A549 (cell line): ENCODE measurements at regions of chr1 and their contacts with region 1.

Region 1: DNA sequence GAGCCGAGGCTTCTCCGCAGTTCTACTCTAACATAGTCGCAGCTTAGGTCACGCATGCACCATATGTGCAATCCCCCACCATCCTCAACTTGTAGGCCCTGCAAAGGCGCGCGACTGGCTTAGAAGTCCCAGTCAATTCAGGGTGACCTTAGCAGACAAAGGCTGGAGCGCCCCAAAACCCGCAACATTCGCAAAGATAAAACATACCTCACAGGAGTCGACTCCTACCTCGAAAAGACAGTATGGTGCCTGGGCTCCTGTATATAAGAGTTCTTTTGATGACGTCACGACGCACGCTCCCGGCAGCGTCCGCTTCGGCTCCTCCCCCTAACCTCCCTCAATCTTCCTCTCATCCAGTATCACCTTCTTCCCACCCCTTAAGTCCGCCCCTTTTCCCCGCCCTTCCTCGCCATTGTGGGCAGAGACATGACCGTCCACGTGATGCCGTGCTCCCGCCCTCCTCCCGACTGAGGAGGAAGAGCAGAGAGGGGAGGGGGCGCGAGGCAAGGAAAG is at the start of gene GAS5:
- DNase-seq: peak; percentile 89 to 100
- ATAC-seq: peak; percentile 71 to 90
- H3K4me3 ChIP-seq: peak within 1 kb of the TSS; percentile 97
- H3K27ac ChIP-seq: peak within 1 kb of the TSS; percentile 96 to 97
- H3K4me1 ChIP-seq: peaks cover 30% of the 10 kb centered on the region
- CTCF ChIP-seq: no peak
- EP300 ChIP-seq: no peak
- POLR2A ChIP-seq: peak; percentile 99
- RAD21 ChIP-seq: no peak
- polyA plus RNA-seq, gene GAS5: 1,735 and 1,903 TPM in 2 replicates

Region 2: GRCh38 chr1:173702736-173703135 is 165.1 kb before region 1 on chr1:
- CTCF ChIA-PET with region 1: no interaction called
- POLR2A ChIA-PET with region 1: no interaction called
- DNase-seq: no peak
- ATAC-seq: no peak
- H3K4me3 ChIP-seq: no peak overlapping the region
- H3K27ac ChIP-seq: no peak overlapping the region
- H3K4me1 ChIP-seq: no peaks in the 10 kb centered on the region
- CTCF ChIP-seq: no peak
- EP300 ChIP-seq: no peak
- POLR2A ChIP-seq: no peak
- RAD21 ChIP-seq: no peak

Region 3: GRCh38 chr1:173824331-173825081 is 43.3 kb before region 1 on chr1 and contains the starts of genes CENPL and DARS2:
- CTCF ChIA-PET with region 1: no interaction called
- POLR2A ChIA-PET with region 1: interaction called, 26 read pairs
- DNase-seq: peak; percentile 91 to 98
- ATAC-seq: peak; percentile 96
- H3K4me3 ChIP-seq: peak within 1 kb of the TSS; percentile 74
- H3K27ac ChIP-seq: peak within 1 kb of the TSS; percentile 90 to 92
- H3K4me1 ChIP-seq: peaks cover 16% of the 10 kb centered on the region; the same call in 1 of the 3 replicates
- CTCF ChIP-seq: no peak
- EP300 ChIP-seq: no peak
- POLR2A ChIP-seq: peak; percentile 51
- RAD21 ChIP-seq: no peak
- polyA plus RNA-seq, gene CENPL: 15.6 and 20.2 TPM in 2 replicates
- polyA plus RNA-seq, gene DARS2: 67.0 and 70.4 TPM in 2 replicates

Region 4: DNA sequence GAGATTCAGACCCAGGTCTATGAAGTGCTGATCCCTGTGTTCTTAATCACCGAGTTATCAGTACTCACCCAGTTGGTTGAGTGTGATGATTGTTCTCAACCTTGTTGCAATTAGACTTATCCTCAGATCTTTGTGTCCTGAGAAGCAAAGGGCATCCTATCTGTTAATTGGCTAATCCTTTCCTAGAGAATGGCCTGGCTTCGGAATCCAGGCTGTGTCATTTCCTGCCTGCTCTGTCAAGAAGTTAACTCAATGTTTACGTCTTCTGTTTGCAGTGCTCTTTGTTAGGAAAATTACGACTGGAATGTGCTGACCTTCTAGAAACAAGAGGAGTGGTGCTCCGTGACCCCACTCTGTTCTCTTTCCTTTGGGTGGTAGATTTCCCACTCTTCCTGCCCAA is 14.7 kb before region 1 on chr1:
- CTCF ChIA-PET with region 1: interaction called, 5 read pairs
- POLR2A ChIA-PET with region 1: interaction called, 20 read pairs
- DNase-seq: no peak
- ATAC-seq: no peak
- H3K4me3 ChIP-seq: no peak overlapping the region
- H3K27ac ChIP-seq: no peak overlapping the region
- H3K4me1 ChIP-seq: no peaks in the 10 kb centered on the region
- CTCF ChIP-seq: no peak
- EP300 ChIP-seq: no peak
- POLR2A ChIP-seq: no peak
- RAD21 ChIP-seq: no peak

Region 5: GRCh38 chr1:173914366-173914871 is 46.6 kb after region 1 on chr1:
- CTCF ChIA-PET with region 1: interaction called, 14 read pairs
- POLR2A ChIA-PET with region 1: interaction called, 3 read pairs
- DNase-seq: peak; percentile 69 to 71
- ATAC-seq: peak; percentile 85 to 94
- H3K4me3 ChIP-seq: no peak overlapping the region
- H3K27ac ChIP-seq: no peak overlapping the region
- H3K4me1 ChIP-seq: no peaks in the 10 kb centered on the region
- CTCF ChIP-seq: peak; percentile 65
- EP300 ChIP-seq: no peak
- POLR2A ChIP-seq: no peak
- RAD21 ChIP-seq: peak; percentile 23 to 54; a peak in 3 of 5 replicates

Region 6: DNA sequence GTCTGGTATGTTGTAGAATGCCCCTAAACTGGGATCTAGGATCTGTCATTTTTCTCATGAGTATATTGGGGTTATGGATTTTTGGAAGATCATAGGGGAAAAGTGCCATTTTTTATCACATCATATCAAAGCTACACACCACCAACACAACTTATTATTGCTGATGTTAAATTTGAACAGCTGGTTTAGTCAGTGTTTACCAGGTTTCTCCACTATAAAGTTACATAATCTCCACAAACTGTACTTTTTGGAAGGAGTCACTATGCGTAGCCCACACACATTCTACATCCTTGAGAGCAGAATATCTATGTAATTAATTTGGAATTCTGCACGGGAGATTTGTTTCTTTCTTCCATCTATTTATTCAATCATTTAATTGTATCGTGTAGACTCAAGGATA is 119.1 kb after region 1 on chr1:
- CTCF ChIA-PET with region 1: no interaction called
- POLR2A ChIA-PET with region 1: interaction called, 10 read pairs
- DNase-seq: no peak
- ATAC-seq: no peak
- H3K4me3 ChIP-seq: no peak overlapping the region
- H3K27ac ChIP-seq: no peak overlapping the region
- H3K4me1 ChIP-seq: no peaks in the 10 kb centered on the region
- CTCF ChIP-seq: no peak
- EP300 ChIP-seq: no peak
- POLR2A ChIP-seq: no peak
- RAD21 ChIP-seq: no peak

Region 7: DNA sequence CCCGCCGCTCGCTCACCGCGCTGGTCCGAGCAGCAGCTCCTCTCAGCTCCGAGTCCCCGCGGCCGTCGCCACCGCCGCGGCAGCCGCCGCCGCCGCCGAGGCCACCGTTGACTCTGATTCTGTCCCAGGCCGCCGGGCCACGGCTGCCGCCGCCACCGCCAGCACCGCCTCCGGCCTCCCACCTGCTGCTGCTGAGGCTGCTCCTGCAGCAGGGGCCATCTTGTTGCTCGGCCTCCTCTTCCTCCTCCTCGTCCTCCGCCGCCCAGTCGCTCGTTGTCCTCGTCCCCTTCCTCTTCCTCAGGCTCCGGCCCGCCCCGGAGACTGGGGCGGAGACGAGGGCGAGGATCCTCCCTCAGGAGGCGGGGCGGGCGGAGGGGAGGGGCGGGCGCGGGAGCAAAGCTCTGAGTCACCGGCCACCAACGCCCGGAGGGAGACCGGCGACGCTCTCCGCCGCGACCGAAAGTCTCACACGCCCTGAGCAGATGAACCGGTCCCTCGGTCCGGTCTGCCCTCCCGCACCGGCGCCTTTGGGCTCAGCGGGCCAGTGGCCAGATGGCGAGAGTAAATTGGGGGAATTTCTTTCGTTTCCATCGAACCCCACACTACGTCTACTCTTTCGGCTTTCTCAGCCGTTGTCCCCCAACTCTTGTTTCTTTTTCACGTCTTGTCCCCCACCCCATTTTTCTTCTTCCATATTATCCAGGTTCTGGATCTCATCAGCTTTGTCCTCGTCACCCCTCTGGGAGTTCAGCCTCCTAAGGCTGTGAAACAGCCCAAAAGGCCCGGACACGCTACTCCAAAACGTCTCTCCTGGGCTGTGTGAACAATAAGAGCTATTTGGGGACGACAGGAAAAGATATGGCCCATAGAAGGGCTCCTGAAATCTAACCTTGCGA is 154.5 kb after region 1 on chr1 and contains the start of gene RC3H1:
- CTCF ChIA-PET with region 1: no interaction called
- POLR2A ChIA-PET with region 1: interaction called, 24 read pairs
- DNase-seq: peak; percentile 67 to 87
- ATAC-seq: peak; percentile 91 to 93
- H3K4me3 ChIP-seq: peak within 1 kb of the TSS; percentile 69
- H3K27ac ChIP-seq: peak within 1 kb of the TSS; percentile 89 to 99
- H3K4me1 ChIP-seq: peaks cover 44% of the 10 kb centered on the region
- CTCF ChIP-seq: no peak
- EP300 ChIP-seq: no peak
- POLR2A ChIP-seq: peak; percentile 88
- RAD21 ChIP-seq: no peak
- polyA plus RNA-seq, gene RC3H1: 12.7 and 17.3 TPM in 2 replicates